GM12878 (cell line): ENCODE measurements at regions of chr2 and their contacts with region 1.

Region 1: GRCh38 chr2:134411828-134412638 is 158.2 kb downstream of the MGAT5 start:
- DNase-seq: peak; percentile 86
- ATAC-seq: peak; percentile 98
- H3K4me3 ChIP-seq: no peak overlapping the region
- H3K27ac ChIP-seq: peak overlapping the region; percentile 81
- H3K4me1 ChIP-seq: peaks cover 27% of the 10 kb centered on the region
- H3K27me3 ChIP-seq: no peaks in the 10 kb centered on the region
- CTCF ChIP-seq: peak; percentile 83 to 98 (median 93); a peak in 5 of 6 replicates
- EP300 ChIP-seq: peak in 1 of 2 experiments; percentile 23; a peak in 1 of 4 replicates
- POLR2A ChIP-seq: no peak
- RAD21 ChIP-seq: peak; percentile 98

Region 2: GRCh38 chr2:134127496-134127895 is 284.5 kb before region 1 on chr2:
- CTCF ChIA-PET with region 1: interaction called, 320 read pairs
- POLR2A ChIA-PET with region 1: no interaction called
- RAD21 ChIA-PET with region 1: interaction called, 201 read pairs
- SMC1A ChIA-PET with region 1: interaction called, 35 read pairs
- in situ Hi-C with region 1: no loop called
- intact Hi-C with region 1: no loop called
- DNase-seq: no peak
- ATAC-seq: peak; percentile 65
- H3K4me3 ChIP-seq: peak overlapping the region; percentile 54
- H3K27ac ChIP-seq: 0 out of 2 replicates have a peak overlapping the region, but pooled peaks have one; percentile 17
- H3K4me1 ChIP-seq: peaks cover 32% of the 10 kb centered on the region
- H3K27me3 ChIP-seq: no peaks in the 10 kb centered on the region
- CTCF ChIP-seq: no peak
- EP300 ChIP-seq: no peak
- POLR2A ChIP-seq: peak; percentile 35; the same call in 1 of the 2 replicates
- RAD21 ChIP-seq: no peak

Region 3: DNA sequence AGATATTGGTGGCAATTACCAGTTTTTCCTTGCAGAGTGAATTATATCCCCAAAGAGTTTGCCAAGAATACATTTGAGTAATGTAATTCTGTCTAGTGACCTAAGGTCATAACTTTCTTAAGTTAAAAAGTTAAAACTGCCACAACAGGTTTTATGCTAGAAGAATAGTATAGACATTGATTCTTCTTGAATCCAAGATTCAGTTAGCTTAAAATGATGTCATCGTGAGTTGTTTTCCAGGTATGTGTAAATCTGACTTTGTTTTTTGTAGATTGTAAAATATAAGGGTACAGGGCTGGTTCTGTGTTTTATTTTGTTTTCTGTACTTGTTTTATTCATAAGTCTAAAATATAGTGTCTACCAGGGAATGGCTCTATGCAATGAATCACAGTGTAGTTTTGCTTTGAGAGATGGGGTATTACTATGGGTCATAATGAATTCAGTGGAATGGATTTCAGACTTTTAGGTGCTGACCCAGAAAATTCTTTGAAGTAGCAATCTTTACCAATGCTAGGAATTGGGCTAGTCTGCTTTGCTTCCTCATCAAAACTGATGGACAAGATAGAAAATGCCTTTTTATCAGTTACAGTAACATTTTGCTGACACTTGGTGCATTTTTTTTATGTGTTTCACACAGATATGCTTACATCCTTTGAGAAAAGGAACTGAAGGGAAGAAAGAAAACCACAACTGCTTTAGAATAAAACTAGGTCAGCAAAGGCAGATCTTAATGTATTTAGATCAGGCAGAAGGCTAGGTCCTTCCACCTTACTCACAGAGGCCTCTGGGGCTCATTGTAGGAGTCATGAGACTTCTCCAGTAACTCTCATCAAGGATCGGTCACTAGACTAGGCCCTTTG is 178.9 kb before region 1 on chr2:
- CTCF ChIA-PET with region 1: interaction called, 24 read pairs
- POLR2A ChIA-PET with region 1: interaction called, 3 read pairs
- RAD21 ChIA-PET with region 1: interaction called, 11 read pairs
- SMC1A ChIA-PET with region 1: interaction called, 11 read pairs
- in situ Hi-C with region 1: no loop called
- intact Hi-C with region 1: loop called (anchors 5 kb)
- DNase-seq: no peak
- ATAC-seq: peak; percentile 59
- H3K4me3 ChIP-seq: peak overlapping the region; percentile 19
- H3K27ac ChIP-seq: peak overlapping the region; percentile 83
- H3K4me1 ChIP-seq: peaks cover 72% of the 10 kb centered on the region
- H3K27me3 ChIP-seq: no peaks in the 10 kb centered on the region
- CTCF ChIP-seq: 0 out of 6 replicates have a peak, but pooled peaks of 2 of the 3 experiments have one; percentile 6 to 17
- EP300 ChIP-seq: 0 out of 4 replicates have a peak, but pooled peaks have one; percentile 4 to 22
- POLR2A ChIP-seq: no peak
- RAD21 ChIP-seq: no peak

Region 4: GRCh38 chr2:134261398-134262131 is 150.5 kb before region 1 on chr2:
- CTCF ChIA-PET with region 1: interaction called, 13 read pairs
- POLR2A ChIA-PET with region 1: no interaction called
- RAD21 ChIA-PET with region 1: interaction called, 20 read pairs
- SMC1A ChIA-PET with region 1: interaction called, 21 read pairs
- in situ Hi-C with region 1: no loop called
- intact Hi-C with region 1: no loop called
- DNase-seq: no peak
- ATAC-seq: peak; percentile 78
- H3K4me3 ChIP-seq: no peak overlapping the region
- H3K27ac ChIP-seq: peak overlapping the region; percentile 74
- H3K4me1 ChIP-seq: peaks cover 68% of the 10 kb centered on the region
- H3K27me3 ChIP-seq: no peaks in the 10 kb centered on the region
- CTCF ChIP-seq: no peak
- EP300 ChIP-seq: no peak
- POLR2A ChIP-seq: no peak
- RAD21 ChIP-seq: no peak

Region 5: DNA sequence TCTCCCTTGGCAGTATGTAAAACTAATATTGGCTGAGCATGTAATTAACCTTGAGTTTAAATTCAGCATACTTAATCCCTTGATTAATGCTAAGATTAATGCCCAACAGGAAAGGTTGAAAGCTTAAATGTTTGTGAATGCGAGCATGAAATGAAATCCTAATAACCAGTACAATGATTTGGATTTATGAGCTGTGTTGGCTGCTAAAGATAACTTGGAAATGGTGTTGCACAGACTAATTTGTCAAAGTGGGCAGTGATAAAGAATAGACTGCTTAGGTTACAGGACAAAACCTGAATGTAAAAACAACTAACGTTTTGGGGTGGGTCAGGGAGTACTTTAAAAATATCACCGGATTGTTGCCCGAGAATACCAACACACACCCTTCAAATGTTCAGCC is 87.6 kb before region 1 on chr2:
- CTCF ChIA-PET with region 1: interaction called, 14 read pairs
- POLR2A ChIA-PET with region 1: no interaction called
- RAD21 ChIA-PET with region 1: interaction called, 3 read pairs
- SMC1A ChIA-PET with region 1: interaction called, 4 read pairs
- in situ Hi-C with region 1: no loop called
- intact Hi-C with region 1: no loop called
- DNase-seq: no peak
- ATAC-seq: peak; percentile 28; the same call in 1 of the 3 replicates
- H3K4me3 ChIP-seq: no peak overlapping the region; the same call in 1 of the 2 replicates
- H3K27ac ChIP-seq: peak overlapping the region; percentile 22
- H3K4me1 ChIP-seq: peaks cover 26% of the 10 kb centered on the region
- H3K27me3 ChIP-seq: no peaks in the 10 kb centered on the region
- CTCF ChIP-seq: no peak
- EP300 ChIP-seq: no peak
- POLR2A ChIP-seq: no peak
- RAD21 ChIP-seq: no peak

Region 6: GRCh38 chr2:134391751-134392160 is 20.3 kb before region 1 on chr2:
- CTCF ChIA-PET with region 1: interaction called, 16 read pairs
- POLR2A ChIA-PET with region 1: interaction called, 3 read pairs
- RAD21 ChIA-PET with region 1: interaction called, 14 read pairs
- SMC1A ChIA-PET with region 1: interaction called, 15 read pairs
- in situ Hi-C with region 1: no loop called
- intact Hi-C with region 1: no loop called
- DNase-seq: peak; percentile 57
- ATAC-seq: peak; percentile 89
- H3K4me3 ChIP-seq: no peak overlapping the region
- H3K27ac ChIP-seq: peak overlapping the region; percentile 66
- H3K4me1 ChIP-seq: peaks cover 21% of the 10 kb centered on the region
- H3K27me3 ChIP-seq: no peaks in the 10 kb centered on the region
- CTCF ChIP-seq: no peak
- EP300 ChIP-seq: peak in 1 of 2 experiments; percentile 42; a peak in 1 of 4 replicates
- POLR2A ChIP-seq: no peak
- RAD21 ChIP-seq: no peak

Region 7: DNA sequence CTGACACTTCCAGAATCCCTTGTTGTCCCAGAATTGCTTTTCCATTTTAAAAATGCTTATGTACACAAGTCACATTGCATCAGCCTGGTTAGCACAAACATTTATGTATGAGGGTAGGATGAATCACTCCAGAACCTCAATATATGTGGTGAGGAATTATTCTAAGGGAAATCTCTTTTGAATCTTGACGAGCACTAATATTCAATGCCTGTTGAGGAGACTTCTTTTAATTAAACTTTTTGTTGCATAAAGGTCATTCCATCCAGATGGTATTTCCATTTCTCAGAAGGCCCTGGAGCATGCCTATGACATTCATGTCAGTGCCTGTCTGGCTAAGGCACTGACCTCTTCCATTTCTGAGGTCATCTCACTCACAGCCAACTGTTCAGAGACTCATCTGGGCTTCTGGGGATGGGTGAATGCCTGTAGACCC is 454.5 kb after region 1 on chr2:
- CTCF ChIA-PET with region 1: no interaction called
- POLR2A ChIA-PET with region 1: no interaction called
- RAD21 ChIA-PET with region 1: no interaction called
- SMC1A ChIA-PET with region 1: no interaction called
- in situ Hi-C with region 1: no loop called
- intact Hi-C with region 1: no loop called
- DNase-seq: no peak
- ATAC-seq: no peak
- H3K4me3 ChIP-seq: no peak overlapping the region
- H3K27ac ChIP-seq: no peak overlapping the region
- H3K4me1 ChIP-seq: no peaks in the 10 kb centered on the region
- H3K27me3 ChIP-seq: no peaks in the 10 kb centered on the region
- CTCF ChIP-seq: no peak
- EP300 ChIP-seq: no peak
- POLR2A ChIP-seq: no peak
- RAD21 ChIP-seq: no peak